Caki2 (cell line): ENCODE measurements at regions of chr10 and their contacts with region 1.

Region 1: DNA sequence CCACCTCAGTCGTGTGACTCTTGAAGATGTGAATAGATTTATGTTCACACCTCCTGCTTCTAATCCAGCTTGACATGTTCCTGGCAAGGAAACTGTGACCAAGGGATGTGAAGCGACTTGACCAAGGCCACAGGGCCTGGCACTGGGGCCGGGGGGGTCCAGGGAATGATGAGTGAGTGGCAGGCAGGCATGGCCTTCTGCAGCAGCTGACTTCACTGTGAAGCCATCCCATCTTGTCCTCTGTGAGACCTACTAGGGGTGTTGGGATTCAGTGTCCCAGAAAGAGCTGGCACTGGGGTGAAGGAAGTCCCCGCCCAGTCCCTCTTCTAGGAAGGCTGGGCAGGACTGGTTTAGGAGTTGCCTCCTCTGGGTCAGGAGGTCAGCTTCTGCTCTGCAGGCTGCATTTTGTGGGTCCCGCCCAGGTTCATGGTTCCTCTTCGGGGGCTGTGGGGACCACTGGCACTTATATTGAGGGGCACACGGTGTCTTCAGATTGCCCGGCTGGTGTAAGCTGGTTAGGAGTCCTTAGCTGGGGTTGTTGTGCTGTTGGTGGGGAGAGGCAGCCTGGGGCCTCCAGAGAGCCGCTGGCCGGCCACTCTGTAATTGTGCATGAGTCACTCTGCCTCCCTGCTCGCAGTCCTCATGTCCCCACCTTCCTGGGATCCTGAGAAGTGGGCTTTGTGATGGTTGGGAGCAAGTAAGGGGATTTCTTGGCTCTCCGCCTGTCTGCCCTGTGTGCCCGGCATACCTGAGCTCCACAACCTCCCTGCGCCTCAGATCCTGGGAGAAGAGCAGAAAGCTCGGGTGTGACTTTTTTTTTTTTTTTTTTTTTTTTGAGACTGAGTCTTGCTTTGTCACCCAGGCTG is 11.0 kb downstream of the ZMIZ1 start:
- DNase-seq: peak; percentile 77

Region 2: GRCh38 chr10:79112881-79113431 is 33.2 kb after region 1 on chr10:
- in situ Hi-C with region 1: loop called (anchors 5 kb)
- DNase-seq: no peak